ENCODE measurements at regions of chr16 and their contacts with region 1.

Region 1: GRCh38 chr16:85963753-85964285 is 64.9 kb downstream of the IRF8 start:
- DNase-seq: no peak
- ATAC-seq: no peak
- H3K4me3 ChIP-seq: no peak overlapping the region
- H3K27ac ChIP-seq: no peak overlapping the region
- H3K4me1 ChIP-seq: no peaks in the 10 kb centered on the region
- H3K27me3 ChIP-seq: peaks cover 37% of the 10 kb centered on the region
- CTCF ChIP-seq: no peak
- POLR2A ChIP-seq: no peak
- RAD21 ChIP-seq: no peak

Region 2: GRCh38 chr16:85750827-85751697 is 212.8 kb before region 1 on chr16 and contains the start of gene C16orf74:
- CTCF ChIA-PET with region 1: no interaction called
- POLR2A ChIA-PET with region 1: no interaction called
- RAD21 ChIA-PET with region 1: no interaction called
- intact Hi-C with region 1: no loop called
- DNase-seq: no peak
- ATAC-seq: peak; percentile 79
- H3K4me3 ChIP-seq: peak within 1 kb of the TSS; percentile 69 to 72
- H3K27ac ChIP-seq: peak within 1 kb of the TSS; percentile 82
- H3K4me1 ChIP-seq: peaks cover 42 to 63% of the 10 kb centered on the region in 2 experiments
- H3K27me3 ChIP-seq: no peaks in the 10 kb centered on the region; the same call in 1 of the 2 replicates
- CTCF ChIP-seq: no peak
- POLR2A ChIP-seq: peak; percentile 47
- RAD21 ChIP-seq: no peak
- total RNA-seq, gene C16orf74: 30.0 TPM

Region 3: GRCh38 chr16:85902366-85903155 is 61.3 kb before region 1 on chr16:
- CTCF ChIA-PET with region 1: no interaction called
- POLR2A ChIA-PET with region 1: no interaction called
- RAD21 ChIA-PET with region 1: no interaction called
- intact Hi-C with region 1: loop called (anchors 10 kb)
- DNase-seq: no peak
- ATAC-seq: no peak
- H3K4me3 ChIP-seq: no peak overlapping the region
- H3K27ac ChIP-seq: no peak overlapping the region
- H3K4me1 ChIP-seq: no peaks in the 10 kb centered on the region
- H3K27me3 ChIP-seq: peaks cover 21% of the 10 kb centered on the region; the same call in 1 of the 2 replicates
- CTCF ChIP-seq: no peak
- POLR2A ChIP-seq: no peak
- RAD21 ChIP-seq: no peak

Region 4: DNA sequence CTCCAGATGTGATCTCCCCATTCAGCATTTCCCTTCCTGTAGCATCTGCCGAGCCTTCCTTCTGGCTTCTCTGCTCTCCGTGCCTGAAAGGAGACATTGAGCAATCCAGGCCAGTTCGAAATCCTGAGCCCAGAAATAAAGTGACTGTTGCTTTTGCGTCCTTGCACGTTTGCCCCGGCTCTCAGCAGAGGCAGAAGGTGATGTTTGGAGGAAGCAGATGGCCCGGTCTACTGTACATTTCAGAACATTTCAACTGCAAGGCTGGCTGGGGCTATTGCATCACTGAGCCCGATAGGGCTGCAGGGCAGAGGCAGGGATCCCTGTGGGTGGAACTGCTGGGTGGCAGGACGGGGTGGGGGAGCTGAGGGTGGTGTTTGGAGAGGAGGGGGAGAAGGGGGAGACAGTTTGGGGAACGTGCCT is 35.4 kb before region 1 on chr16:
- CTCF ChIA-PET with region 1: no interaction called
- POLR2A ChIA-PET with region 1: no interaction called
- RAD21 ChIA-PET with region 1: no interaction called
- intact Hi-C with region 1: no loop called
- DNase-seq: no peak
- ATAC-seq: no peak
- H3K4me3 ChIP-seq: no peak overlapping the region
- H3K27ac ChIP-seq: no peak overlapping the region
- H3K4me1 ChIP-seq: peaks cover 3 to 10% of the 10 kb centered on the region in 2 experiments; a peak in 2 of 4 replicates
- H3K27me3 ChIP-seq: peaks cover 26% of the 10 kb centered on the region; the same call in 1 of the 2 replicates
- CTCF ChIP-seq: no peak
- POLR2A ChIP-seq: no peak
- RAD21 ChIP-seq: no peak

Region 5: DNA sequence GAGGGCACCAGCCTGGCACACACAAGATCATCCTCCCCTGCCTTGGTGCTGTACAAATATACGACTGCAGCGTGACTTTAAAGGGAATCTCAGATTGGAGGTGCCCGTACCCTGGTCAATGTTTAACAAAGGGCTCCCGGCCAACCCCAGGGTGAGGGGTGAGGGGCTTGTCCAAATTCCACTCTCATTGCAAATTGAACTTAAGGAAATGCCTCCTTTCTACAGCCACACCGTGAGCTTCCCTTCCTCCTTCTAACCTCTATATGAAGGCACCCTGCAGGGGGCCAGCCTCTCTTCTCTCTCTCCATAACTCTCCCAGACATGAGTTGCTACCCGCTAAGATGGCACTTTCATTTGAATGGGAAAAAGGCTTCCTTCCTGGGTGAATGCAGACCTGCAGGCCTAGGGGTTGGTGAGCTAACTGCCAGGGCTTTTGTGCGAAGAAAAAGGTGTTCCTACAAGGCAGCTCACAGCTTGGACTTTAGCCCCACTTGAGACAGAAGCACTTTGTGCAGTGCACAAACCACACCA is 11.7 kb after region 1 on chr16:
- CTCF ChIA-PET with region 1: no interaction called
- POLR2A ChIA-PET with region 1: no interaction called
- RAD21 ChIA-PET with region 1: no interaction called
- intact Hi-C with region 1: no loop called
- DNase-seq: no peak
- ATAC-seq: no peak
- H3K4me3 ChIP-seq: no peak overlapping the region
- H3K27ac ChIP-seq: no peak overlapping the region
- H3K4me1 ChIP-seq: no peaks in the 10 kb centered on the region
- H3K27me3 ChIP-seq: peaks cover 35% of the 10 kb centered on the region
- CTCF ChIP-seq: no peak
- POLR2A ChIP-seq: no peak
- RAD21 ChIP-seq: no peak

Region 6: GRCh38 chr16:85987750-85988078 is 23.9 kb after region 1 on chr16:
- CTCF ChIA-PET with region 1: no interaction called
- POLR2A ChIA-PET with region 1: no interaction called
- RAD21 ChIA-PET with region 1: no interaction called
- intact Hi-C with region 1: no loop called
- DNase-seq: no peak
- ATAC-seq: no peak
- H3K4me3 ChIP-seq: no peak overlapping the region
- H3K27ac ChIP-seq: no peak overlapping the region
- H3K4me1 ChIP-seq: no peaks in the 10 kb centered on the region
- H3K27me3 ChIP-seq: peaks cover 81% of the 10 kb centered on the region
- CTCF ChIP-seq: peak in 1 of 3 experiments; percentile 30; a peak in 1 of 6 replicates
- POLR2A ChIP-seq: no peak
- RAD21 ChIP-seq: no peak